ENCODE measurements at regions of chr1 and their contacts with region 1.

Region 1: GRCh38 chr1:183471743-183472487 is 384 bp upstream of the SMG7 start:
- H3K4me3 Mint-ChIP-seq: peak overlapping the region; percentile 97
- H3K27ac Mint-ChIP-seq: peak overlapping the region; percentile 97
- H3K4me1 Mint-ChIP-seq: peaks cover 33% of the 10 kb centered on the region
- H3K27me3 Mint-ChIP-seq: no peaks in the 10 kb centered on the region

Region 2: DNA sequence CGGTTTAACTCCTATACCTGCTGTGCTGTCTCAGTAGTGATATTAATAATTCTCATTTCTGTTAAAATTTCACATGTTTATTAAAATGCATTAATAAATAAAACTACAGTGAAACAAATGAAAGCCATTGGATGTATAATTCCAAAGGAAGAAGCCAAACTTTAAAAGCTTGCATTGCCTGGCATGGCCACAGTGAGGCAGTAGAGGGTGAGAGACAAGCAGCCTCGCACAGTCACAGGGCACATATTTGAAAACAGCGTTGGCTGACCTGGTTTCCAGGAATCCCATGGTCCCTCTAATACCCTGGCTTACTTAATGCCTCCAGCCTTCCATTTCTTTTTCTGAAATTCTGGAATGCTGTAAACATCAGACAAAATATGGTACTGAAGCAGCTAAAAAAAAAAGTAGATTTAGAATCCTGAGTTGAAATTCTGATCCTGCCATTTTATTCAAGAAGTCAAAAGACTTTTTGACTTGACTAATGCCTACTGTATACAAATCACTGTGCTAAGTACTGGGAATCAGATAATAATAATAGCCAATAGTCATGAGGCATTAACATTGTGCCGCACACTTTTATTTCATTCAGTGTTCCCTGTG is 876.2 kb before region 1 on chr1:
- intact Hi-C with region 1: loop called (anchors 10 kb)
- H3K4me3 Mint-ChIP-seq: no peak overlapping the region
- H3K27ac Mint-ChIP-seq: no peak overlapping the region
- H3K4me1 Mint-ChIP-seq: peaks cover 25% of the 10 kb centered on the region
- H3K27me3 Mint-ChIP-seq: peaks cover 8% of the 10 kb centered on the region

Region 3: DNA sequence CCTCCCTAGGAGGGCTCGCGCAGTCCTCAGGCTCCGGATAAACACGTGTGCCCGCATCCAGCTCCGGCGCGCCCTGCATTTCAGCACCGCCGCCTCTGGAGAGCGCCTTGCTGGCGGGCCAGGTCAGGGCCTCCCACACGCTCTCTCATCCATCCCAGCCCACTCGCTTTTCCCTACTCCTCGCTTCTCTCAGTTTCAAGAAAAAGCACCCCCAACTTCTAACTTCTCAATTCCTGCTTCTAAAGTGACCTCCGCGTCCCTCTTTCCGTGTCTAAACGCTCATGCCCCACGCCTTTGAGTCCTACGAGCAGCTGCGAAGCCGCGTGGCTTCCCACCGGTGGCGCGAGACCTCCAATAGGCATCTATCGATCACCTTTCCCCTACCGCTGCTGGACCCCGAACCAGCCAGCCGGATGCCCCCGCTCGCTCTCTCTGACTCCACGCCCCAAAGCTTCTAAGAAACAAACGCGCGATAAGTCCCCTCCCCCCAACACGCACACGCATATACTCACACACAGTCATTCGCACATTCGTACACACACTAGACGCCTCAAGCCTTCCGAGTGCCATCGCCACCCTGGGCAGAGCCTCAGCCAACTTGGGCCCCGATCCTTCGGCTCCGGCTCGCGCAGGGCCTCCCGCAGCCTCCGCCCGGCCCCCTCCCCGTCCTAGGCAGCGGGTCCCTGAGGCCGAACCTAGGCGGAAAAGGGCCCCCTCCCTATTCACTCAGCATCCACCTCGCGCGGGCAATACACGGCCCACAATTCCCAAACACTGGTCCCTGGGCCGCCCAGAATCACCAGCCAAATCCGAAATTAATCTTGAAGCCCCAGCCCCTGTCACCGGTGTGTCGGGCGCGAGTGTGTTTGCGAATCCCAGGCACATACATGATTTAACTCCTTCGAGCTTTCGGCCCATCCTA is 54.8 kb before region 1 on chr1:
- intact Hi-C with region 1: loop called (anchors 2 kb)
- H3K4me3 Mint-ChIP-seq: peak overlapping the region; percentile 40
- H3K27ac Mint-ChIP-seq: no peak overlapping the region
- H3K4me1 Mint-ChIP-seq: peaks cover 30% of the 10 kb centered on the region
- H3K27me3 Mint-ChIP-seq: peaks cover 61% of the 10 kb centered on the region

Region 4: GRCh38 chr1:183551904-183552303 is 80.0 kb after region 1 on chr1:
- intact Hi-C with region 1: loop called (anchors 5 kb)
- H3K4me3 Mint-ChIP-seq: no peak overlapping the region
- H3K27ac Mint-ChIP-seq: peak overlapping the region; percentile 80
- H3K4me1 Mint-ChIP-seq: peaks cover 80% of the 10 kb centered on the region
- H3K27me3 Mint-ChIP-seq: no peaks in the 10 kb centered on the region

Region 5: DNA sequence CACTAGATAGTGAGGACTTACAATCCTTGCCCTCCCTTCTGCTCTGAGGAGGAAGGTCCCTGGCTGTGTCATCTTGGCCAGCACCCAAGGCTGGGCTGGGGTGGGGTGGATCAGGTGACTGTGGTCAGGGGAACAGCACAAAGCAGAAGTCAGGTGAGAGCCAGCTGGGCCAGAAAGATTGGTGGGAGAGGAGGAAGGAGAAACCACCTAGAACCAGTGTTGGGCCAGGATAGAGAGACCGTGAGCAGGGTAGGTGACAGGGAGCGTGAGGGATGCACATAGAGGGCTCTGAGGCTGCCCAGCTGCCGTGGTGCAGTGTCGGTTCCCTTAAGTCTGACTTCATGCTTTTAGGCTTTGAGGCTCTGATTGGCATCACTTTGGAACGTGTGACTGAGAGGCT is 95.7 kb after region 1 on chr1:
- intact Hi-C with region 1: loop called (anchors 1 kb)
- H3K4me3 Mint-ChIP-seq: peak overlapping the region; percentile 14
- H3K27ac Mint-ChIP-seq: peak overlapping the region; percentile 86
- H3K4me1 Mint-ChIP-seq: peaks cover 87% of the 10 kb centered on the region
- H3K27me3 Mint-ChIP-seq: no peaks in the 10 kb centered on the region

Region 6: GRCh38 chr1:183635606-183636333 is 163.9 kb after region 1 on chr1 and contains the start of gene ARPC5:
- intact Hi-C with region 1: loop called (anchors 2 kb)
- H3K4me3 Mint-ChIP-seq: peak within 1 kb of the TSS; percentile 99
- H3K27ac Mint-ChIP-seq: peak within 1 kb of the TSS; percentile 98
- H3K4me1 Mint-ChIP-seq: peaks cover 27% of the 10 kb centered on the region
- H3K27me3 Mint-ChIP-seq: peaks cover 2% of the 10 kb centered on the region

Measured in dendritic cell treated with granulocyte-macrophage colony-stimulating factor and Interleukin-4, amounts not matched to agents 40 ng/mL and 50 ng/mL, for 4 days (primary cell).